H1 (cell line): ENCODE measurements at regions of chr14 and their contacts with region 1.

Region 1: GRCh38 chr14:70714055-70714621 is 72.4 kb downstream of the TTC9 start:
- DNase-seq: peak in 1 of 2 experiments; percentile 63
- H3K4me3 ChIP-seq: no peak overlapping the region
- H3K27ac ChIP-seq: no peak overlapping the region
- H3K4me1 ChIP-seq: peaks cover 6 to 21% (median 11%) of the 10 kb centered on the region in 4 experiments
- H3K27me3 ChIP-seq: no peaks in the 10 kb centered on the region
- CTCF ChIP-seq: peak in 2 of 3 experiments; percentile 36 to 53; a peak in 2 of 4 replicates
- EP300 ChIP-seq: no peak
- POLR2A ChIP-seq: no peak
- RAD21 ChIP-seq: peak; percentile 63 to 66

Region 2: GRCh38 chr14:70555890-70556289 is 158.2 kb before region 1 on chr14:
- CTCF ChIA-PET with region 1: no interaction called
- POLR2A ChIA-PET with region 1: no interaction called
- DNase-seq: peak in 1 of 2 experiments; percentile 3
- H3K4me3 ChIP-seq: no peak overlapping the region
- H3K27ac ChIP-seq: no peak overlapping the region
- H3K4me1 ChIP-seq: no peaks in the 10 kb centered on the region
- H3K27me3 ChIP-seq: peaks cover 0 to 1% (median 0%) of the 10 kb centered on the region in 4 experiments; a peak in 1 of 7 replicates
- CTCF ChIP-seq: no peak
- EP300 ChIP-seq: no peak
- POLR2A ChIP-seq: no peak
- RAD21 ChIP-seq: peak in 1 of 2 experiments; percentile 13; a peak in 1 of 4 replicates

Region 3: DNA sequence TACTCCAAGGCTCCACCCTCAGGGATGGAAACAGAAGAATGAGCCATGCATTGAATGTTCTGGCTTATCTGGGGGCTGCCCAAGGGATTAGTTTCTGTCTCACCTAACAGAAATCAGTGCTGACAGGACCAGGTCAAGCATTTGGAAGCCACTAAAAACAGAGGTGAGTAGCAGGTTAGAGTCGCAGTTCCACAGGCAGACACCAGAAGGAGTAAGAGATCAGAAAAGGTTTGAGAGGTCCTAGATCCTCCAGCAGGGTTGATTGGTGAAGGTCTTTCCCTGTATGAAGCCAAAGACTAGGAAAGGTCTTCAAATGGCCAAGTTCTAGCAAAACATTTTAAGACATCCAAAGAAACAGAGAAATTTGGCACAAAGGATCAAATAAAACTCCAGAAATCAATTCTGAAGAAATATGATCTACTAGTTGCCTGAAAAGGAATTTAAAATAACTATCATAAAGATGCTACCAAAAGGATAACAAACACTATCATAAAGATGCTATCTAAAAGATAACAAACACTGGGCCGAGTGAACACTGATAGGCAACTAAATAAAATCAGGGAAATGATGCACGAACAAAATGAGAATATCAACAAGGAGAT is 91.9 kb before region 1 on chr14:
- CTCF ChIA-PET with region 1: interaction called, 154 read pairs
- POLR2A ChIA-PET with region 1: interaction called, 4 read pairs
- DNase-seq: peak in 1 of 2 experiments; percentile 75
- H3K4me3 ChIP-seq: no peak overlapping the region
- H3K27ac ChIP-seq: no peak overlapping the region
- H3K4me1 ChIP-seq: no peaks in the 10 kb centered on the region
- H3K27me3 ChIP-seq: no peaks in the 10 kb centered on the region
- CTCF ChIP-seq: peak; percentile 31 to 95 (median 94)
- EP300 ChIP-seq: no peak
- POLR2A ChIP-seq: no peak
- RAD21 ChIP-seq: peak; percentile 96 to 97

Region 4: GRCh38 chr14:70640938-70641547 is 73.1 kb before region 1 on chr14:
- CTCF ChIA-PET with region 1: interaction called, 15 read pairs
- POLR2A ChIA-PET with region 1: interaction called, 14 read pairs
- DNase-seq: peak in 1 of 2 experiments; percentile 66
- H3K4me3 ChIP-seq: peak overlapping the region; percentile 59 to 98 (median 78)
- H3K27ac ChIP-seq: no peak overlapping the region
- H3K4me1 ChIP-seq: peaks cover 11 to 21% (median 14%) of the 10 kb centered on the region in 4 experiments; a peak in 5 of 7 replicates
- H3K27me3 ChIP-seq: no peaks in the 10 kb centered on the region
- CTCF ChIP-seq: no peak
- EP300 ChIP-seq: no peak
- POLR2A ChIP-seq: no peak
- RAD21 ChIP-seq: no peak

Region 5: GRCh38 chr14:70648346-70648745 is 65.8 kb before region 1 on chr14:
- CTCF ChIA-PET with region 1: interaction called, 15 read pairs
- POLR2A ChIA-PET with region 1: interaction called, 14 read pairs
- DNase-seq: peak in 1 of 2 experiments; percentile 16
- H3K4me3 ChIP-seq: no peak overlapping the region
- H3K27ac ChIP-seq: no peak overlapping the region
- H3K4me1 ChIP-seq: peaks cover 26 to 54% (median 41%) of the 10 kb centered on the region in 4 experiments; a peak in 6 of 7 replicates
- H3K27me3 ChIP-seq: no peaks in the 10 kb centered on the region
- CTCF ChIP-seq: no peak
- EP300 ChIP-seq: no peak
- POLR2A ChIP-seq: no peak
- RAD21 ChIP-seq: no peak

Region 6: GRCh38 chr14:70692226-70692625 is 21.9 kb before region 1 on chr14:
- CTCF ChIA-PET with region 1: interaction called, 12 read pairs
- POLR2A ChIA-PET with region 1: interaction called, 43 read pairs
- DNase-seq: no peak
- H3K4me3 ChIP-seq: no peak overlapping the region
- H3K27ac ChIP-seq: no peak overlapping the region
- H3K4me1 ChIP-seq: peaks cover 0 to 6% (median 0%) of the 10 kb centered on the region in 4 experiments; a peak in 1 of 7 replicates
- H3K27me3 ChIP-seq: no peaks in the 10 kb centered on the region
- CTCF ChIP-seq: no peak
- EP300 ChIP-seq: no peak
- POLR2A ChIP-seq: no peak
- RAD21 ChIP-seq: no peak

Region 7: GRCh38 chr14:70698288-70698687 is 15.8 kb before region 1 on chr14:
- CTCF ChIA-PET with region 1: interaction called, 30 read pairs
- POLR2A ChIA-PET with region 1: interaction called, 43 read pairs
- DNase-seq: no peak
- H3K4me3 ChIP-seq: no peak overlapping the region
- H3K27ac ChIP-seq: no peak overlapping the region
- H3K4me1 ChIP-seq: peaks cover 0 to 5% (median 1%) of the 10 kb centered on the region in 4 experiments; a peak in 3 of 7 replicates
- H3K27me3 ChIP-seq: no peaks in the 10 kb centered on the region
- CTCF ChIP-seq: no peak
- EP300 ChIP-seq: no peak
- POLR2A ChIP-seq: no peak
- RAD21 ChIP-seq: no peak

Region 8: GRCh38 chr14:70726651-70727375 is 12.7 kb after region 1 on chr14:
- CTCF ChIA-PET with region 1: interaction called, 33 read pairs
- POLR2A ChIA-PET with region 1: interaction called, 21 read pairs
- DNase-seq: no peak
- H3K4me3 ChIP-seq: no peak overlapping the region
- H3K27ac ChIP-seq: peak overlapping the region; percentile 24; the same call in 1 of the 2 replicates
- H3K4me1 ChIP-seq: 0 out of 7 replicates have a peak, but pooled peaks cover 0 to under 1% (median 0%) of the 10 kb centered on the region in 4 experiments
- H3K27me3 ChIP-seq: no peaks in the 10 kb centered on the region
- CTCF ChIP-seq: no peak
- EP300 ChIP-seq: no peak
- POLR2A ChIP-seq: no peak
- RAD21 ChIP-seq: no peak